ENCODE measurements at regions of chr6 and their contacts with region 1.

Region 1: GRCh38 chr6:26156076-26156849 is 69.0 kb downstream of the HFE start:
- DNase-seq: peak; percentile 76 to 94 (median 88)
- ATAC-seq: peak; percentile 33
- H3K4me3 ChIP-seq: peak overlapping the region; percentile 92
- H3K4me3 Mint-ChIP-seq: peak overlapping the region; percentile 99
- H3K27ac ChIP-seq: peak overlapping the region; percentile 67 to 91
- H3K27ac Mint-ChIP-seq: peak overlapping the region; percentile 97
- H3K4me1 ChIP-seq: peaks cover 37% of the 10 kb centered on the region
- H3K4me1 Mint-ChIP-seq: peaks cover 40% of the 10 kb centered on the region
- H3K27me3 ChIP-seq: no peaks in the 10 kb centered on the region
- H3K27me3 Mint-ChIP-seq: peaks cover 12% of the 10 kb centered on the region
- CTCF ChIP-seq: no peak

Region 2: DNA sequence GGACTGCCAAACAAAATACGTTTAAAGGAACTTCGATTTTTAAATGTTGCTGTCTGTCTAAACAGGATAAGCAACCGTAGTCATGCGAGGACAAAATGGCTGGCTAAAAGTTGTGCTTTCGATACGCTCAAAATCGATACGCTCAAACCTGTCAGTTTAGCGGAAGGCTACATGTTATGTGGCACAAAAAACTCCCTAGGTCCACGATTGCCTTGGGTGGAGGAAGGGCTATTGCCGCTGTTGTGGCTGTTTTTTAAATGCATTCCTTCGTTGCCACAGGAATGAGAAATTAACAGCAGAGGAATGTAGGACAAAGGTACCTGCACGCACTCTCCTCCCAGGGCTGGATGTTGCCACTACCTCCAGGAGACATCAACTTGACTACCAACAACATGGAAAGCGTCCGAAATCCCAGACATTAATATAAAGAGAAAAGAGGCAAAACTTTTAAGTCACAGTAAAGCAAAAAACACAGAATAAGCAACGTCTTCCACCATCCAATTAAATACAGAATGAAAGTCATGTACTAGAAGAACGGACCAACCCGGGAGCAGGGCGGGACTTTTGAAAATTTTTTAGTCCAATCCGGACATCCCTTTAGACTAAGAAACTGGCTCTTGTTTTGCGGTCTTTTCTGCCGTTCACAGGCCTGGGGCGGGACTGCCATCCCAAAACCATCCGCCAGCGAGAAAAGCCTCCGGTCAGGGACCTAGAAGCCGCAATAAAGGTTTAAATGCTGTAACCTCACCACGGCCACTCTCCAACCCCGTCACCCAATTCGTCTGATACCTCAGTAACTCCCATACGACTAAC is 101.2 kb before region 1 on chr6:
- CTCF ChIA-PET with region 1: no interaction called
- POLR2A ChIA-PET with region 1: interaction called, 185 read pairs
- intact Hi-C with region 1: loop called in 1 of 2 experiments (anchors 10 kb)
- DNase-seq: peak; percentile 68 to 97 (median 80)
- ATAC-seq: peak; percentile 71
- H3K4me3 ChIP-seq: peak overlapping the region; percentile 89
- H3K4me3 Mint-ChIP-seq: peak overlapping the region; percentile 97
- H3K27ac ChIP-seq: peak overlapping the region; percentile 81
- H3K27ac Mint-ChIP-seq: peak overlapping the region; percentile 96
- H3K4me1 ChIP-seq: peaks cover 29% of the 10 kb centered on the region
- H3K4me1 Mint-ChIP-seq: peaks cover 28% of the 10 kb centered on the region
- H3K27me3 ChIP-seq: no peaks in the 10 kb centered on the region
- H3K27me3 Mint-ChIP-seq: no peaks in the 10 kb centered on the region
- CTCF ChIP-seq: no peak

Region 3: GRCh38 chr6:26141378-26141904 is 14.8 kb before region 1 on chr6:
- CTCF ChIA-PET with region 1: no interaction called
- POLR2A ChIA-PET with region 1: interaction called, 39 read pairs
- intact Hi-C with region 1: no loop called
- DNase-seq: no peak
- ATAC-seq: no peak
- H3K4me3 ChIP-seq: no peak overlapping the region
- H3K4me3 Mint-ChIP-seq: no peak overlapping the region
- H3K27ac ChIP-seq: no peak overlapping the region
- H3K27ac Mint-ChIP-seq: no peak overlapping the region
- H3K4me1 ChIP-seq: no peaks in the 10 kb centered on the region
- H3K4me1 Mint-ChIP-seq: peaks cover 5% of the 10 kb centered on the region
- H3K27me3 ChIP-seq: no peaks in the 10 kb centered on the region
- H3K27me3 Mint-ChIP-seq: no peaks in the 10 kb centered on the region
- CTCF ChIP-seq: no peak

Region 4: GRCh38 chr6:26234421-26235296 is 78.4 kb after region 1 on chr6:
- CTCF ChIA-PET with region 1: interaction called, 7 read pairs
- POLR2A ChIA-PET with region 1: interaction called, 365 read pairs
- intact Hi-C with region 1: no loop called
- DNase-seq: peak; percentile 46 to 96 (median 67)
- ATAC-seq: peak; percentile 73
- H3K4me3 ChIP-seq: peak overlapping the region; percentile 66
- H3K4me3 Mint-ChIP-seq: peak overlapping the region; percentile 100
- H3K27ac ChIP-seq: peak overlapping the region; percentile 78 to 87
- H3K27ac Mint-ChIP-seq: peak overlapping the region; percentile 99
- H3K4me1 ChIP-seq: peaks cover 19% of the 10 kb centered on the region
- H3K4me1 Mint-ChIP-seq: peaks cover 42% of the 10 kb centered on the region
- H3K27me3 ChIP-seq: no peaks in the 10 kb centered on the region
- H3K27me3 Mint-ChIP-seq: peaks cover 8% of the 10 kb centered on the region
- CTCF ChIP-seq: no peak

Region 5: DNA sequence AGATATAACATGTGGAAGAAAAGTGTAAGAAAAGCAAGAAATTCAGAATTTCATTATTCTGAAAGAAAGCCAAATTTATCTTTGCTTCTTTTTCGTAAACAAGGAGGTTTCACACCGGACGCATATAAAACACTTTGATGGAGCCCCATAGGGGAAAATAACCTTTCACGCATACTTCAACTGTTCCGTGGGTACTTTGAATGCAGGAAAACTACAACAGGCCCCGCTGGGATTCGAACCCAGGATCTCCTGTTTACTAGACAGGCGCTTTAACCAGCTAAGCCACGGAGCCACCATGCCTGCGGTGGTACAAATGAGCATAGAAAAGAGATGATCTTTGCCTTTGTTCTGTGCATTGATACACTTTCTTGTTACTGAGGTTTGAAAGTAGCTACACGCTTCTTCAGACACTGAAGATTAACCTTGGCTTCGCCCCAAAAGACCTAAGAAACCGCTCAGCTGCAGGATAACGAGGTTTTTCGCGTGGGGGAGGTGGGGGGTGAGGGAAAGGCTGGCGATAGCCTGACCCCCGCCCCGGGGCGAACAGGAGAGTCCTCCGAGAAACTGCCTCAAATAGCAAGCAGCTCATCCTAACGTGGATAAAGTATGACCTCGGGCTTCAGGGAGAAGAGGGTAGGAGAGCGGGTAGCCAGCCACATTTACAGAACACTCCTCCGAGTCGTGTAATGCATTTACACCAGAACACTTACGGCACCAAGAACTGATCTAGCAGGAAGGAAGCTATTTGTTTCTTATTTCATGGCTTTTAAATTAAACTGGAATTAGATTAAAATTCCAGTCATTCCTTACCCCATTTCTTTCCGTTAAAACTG is 376.7 kb after region 1 on chr6:
- CTCF ChIA-PET with region 1: no interaction called
- POLR2A ChIA-PET with region 1: interaction called, 23 read pairs
- intact Hi-C with region 1: no loop called
- DNase-seq: peak; percentile 79 to 96 (median 90)
- ATAC-seq: peak; percentile 36
- H3K4me3 ChIP-seq: peak overlapping the region; percentile 72
- H3K4me3 Mint-ChIP-seq: peak overlapping the region; percentile 98
- H3K27ac ChIP-seq: peak overlapping the region; percentile 20 to 59
- H3K27ac Mint-ChIP-seq: peak overlapping the region; percentile 97
- H3K4me1 ChIP-seq: peaks cover 28% of the 10 kb centered on the region
- H3K4me1 Mint-ChIP-seq: peaks cover 50% of the 10 kb centered on the region
- H3K27me3 ChIP-seq: no peaks in the 10 kb centered on the region
- H3K27me3 Mint-ChIP-seq: peaks cover 16% of the 10 kb centered on the region
- CTCF ChIP-seq: no peak

Region 6: DNA sequence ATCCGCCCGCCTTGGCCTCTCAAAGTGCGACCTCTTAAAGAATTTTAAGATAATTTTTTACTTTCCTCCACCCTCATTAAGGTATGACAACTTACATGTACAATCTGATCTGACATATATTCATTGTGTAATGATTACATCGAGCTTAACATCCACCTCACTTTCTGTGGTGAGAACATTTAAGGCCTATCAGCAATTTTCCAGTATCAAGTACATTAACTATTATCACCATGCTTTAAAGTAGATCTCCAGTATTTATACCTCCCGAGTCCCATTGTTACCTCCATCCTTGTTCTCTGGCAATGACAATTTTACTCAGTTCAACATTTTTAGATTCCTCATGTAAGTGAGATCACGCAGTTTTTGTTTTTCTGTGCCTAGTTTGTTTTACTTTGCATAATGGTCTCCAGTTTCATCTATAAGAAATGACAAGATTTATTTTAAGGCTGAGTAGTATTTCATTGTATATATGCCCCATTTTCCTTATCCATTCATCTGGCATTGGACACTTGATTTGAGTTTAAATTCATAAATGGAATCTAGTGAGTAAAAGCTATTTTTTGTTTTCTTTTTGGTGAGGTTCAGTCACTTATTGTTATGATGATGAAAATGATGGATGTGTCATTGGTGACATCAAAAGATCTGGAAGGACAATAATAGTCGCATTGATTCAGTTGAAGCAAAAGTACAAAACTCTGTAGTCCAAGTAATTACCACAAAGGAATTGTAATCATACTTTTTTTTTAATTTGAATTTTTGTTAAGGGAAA is 1668.9 kb after region 1 on chr6:
- CTCF ChIA-PET with region 1: no interaction called
- POLR2A ChIA-PET with region 1: interaction called, 15 read pairs
- intact Hi-C with region 1: no loop called
- DNase-seq: peak in 2 of 14 experiments; percentile 27 to 38
- ATAC-seq: no peak
- H3K4me3 ChIP-seq: peak overlapping the region; percentile 82
- H3K4me3 Mint-ChIP-seq: peak overlapping the region; percentile 90
- H3K27ac ChIP-seq: peak overlapping the region; percentile 77 to 87
- H3K27ac Mint-ChIP-seq: peak overlapping the region; percentile 99
- H3K4me1 ChIP-seq: peaks cover 8% of the 10 kb centered on the region
- H3K4me1 Mint-ChIP-seq: peaks cover 38% of the 10 kb centered on the region
- H3K27me3 ChIP-seq: no peaks in the 10 kb centered on the region
- H3K27me3 Mint-ChIP-seq: no peaks in the 10 kb centered on the region
- CTCF ChIP-seq: no peak

Measured in CD4-positive, alpha-beta T cell (primary cell).